GM18951 (cell line): ENCODE measurements at regions of chrX and their contacts with region 1.

Region 1: GRCh38 chrX:27186664-27187063 is 276.5 kb downstream of the PPP4R3C start:
- POLR2A ChIP-seq: no peak

Region 2: DNA sequence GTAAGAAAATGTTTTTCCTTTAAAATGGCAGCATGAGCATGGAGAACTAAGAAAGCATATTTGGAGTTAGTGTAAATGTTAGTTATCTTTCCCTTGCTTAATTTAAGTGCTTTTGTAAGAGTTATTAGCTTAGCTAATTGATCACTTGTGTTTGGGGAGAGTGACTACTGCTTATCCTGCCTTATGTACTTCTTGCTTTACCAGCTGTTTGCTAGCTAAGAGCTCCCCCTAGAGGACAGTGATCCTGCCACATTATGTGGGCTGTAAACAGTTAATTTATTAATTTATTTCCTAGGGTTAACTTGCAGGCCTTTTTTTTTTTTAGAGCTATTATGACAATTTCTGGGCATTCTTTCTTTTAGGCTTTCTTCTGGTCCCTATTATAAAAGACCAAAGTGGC is 534.9 kb before region 1 on chrX:
- in situ Hi-C with region 1: loop called (anchors 25 kb)
- POLR2A ChIP-seq: no peak

Region 3: DNA sequence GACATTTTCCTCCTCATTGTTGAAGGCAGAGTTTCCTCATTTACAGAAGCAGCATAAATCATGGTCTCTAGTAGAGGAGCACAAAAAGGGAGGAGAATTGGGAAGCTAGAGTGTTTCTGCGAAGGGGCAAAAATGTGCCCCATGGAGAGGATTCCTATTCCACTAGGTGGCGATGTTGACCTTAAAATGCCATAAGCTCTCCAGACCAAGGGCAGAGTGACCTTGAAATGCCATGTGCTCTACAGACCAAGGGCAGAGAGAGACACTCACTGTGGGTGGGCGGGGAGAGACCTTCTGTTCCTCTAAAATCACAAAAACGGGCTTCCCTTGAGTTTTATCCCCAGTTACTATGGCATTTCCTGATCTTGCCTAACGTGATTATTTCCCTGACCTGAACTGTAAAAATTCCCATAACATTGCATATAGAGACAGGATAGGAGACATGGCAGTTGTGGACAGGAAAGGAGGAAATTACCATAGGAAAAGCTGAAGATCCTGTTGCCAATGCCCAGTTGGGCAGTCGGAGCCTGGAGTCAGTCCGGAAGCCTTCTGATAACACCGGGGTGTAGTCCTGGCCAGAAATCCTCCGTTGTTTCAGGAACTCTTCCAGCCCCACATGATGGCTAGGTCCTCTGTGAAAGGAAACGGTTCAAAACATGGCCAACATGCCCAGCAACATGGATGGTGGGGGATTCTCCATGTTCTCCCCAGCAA is 403.0 kb before region 1 on chrX:
- in situ Hi-C with region 1: loop called (anchors 25 kb)
- POLR2A ChIP-seq: no peak

Region 4: GRCh38 chrX:27380163-27380845 is 193.6 kb after region 1 on chrX:
- in situ Hi-C with region 1: no loop called
- POLR2A ChIP-seq: no peak